ENCODE measurements at regions of chr5 and their contacts with region 1.

Region 1: GRCh38 chr5:17248999-17249634 is 31.7 kb downstream of the BASP1 start:
- DNase-seq: peak in 1 of 2 donors; percentile 15
- ATAC-seq: peak; percentile 50 to 64
- H3K4me3 ChIP-seq: no peak overlapping the region
- H3K27ac ChIP-seq: no peak overlapping the region
- H3K4me1 ChIP-seq: no peaks in the 10 kb centered on the region
- H3K27me3 ChIP-seq: no peaks in the 10 kb centered on the region
- CTCF ChIP-seq: no peak
- POLR2A ChIP-seq: no peak

Region 2: DNA sequence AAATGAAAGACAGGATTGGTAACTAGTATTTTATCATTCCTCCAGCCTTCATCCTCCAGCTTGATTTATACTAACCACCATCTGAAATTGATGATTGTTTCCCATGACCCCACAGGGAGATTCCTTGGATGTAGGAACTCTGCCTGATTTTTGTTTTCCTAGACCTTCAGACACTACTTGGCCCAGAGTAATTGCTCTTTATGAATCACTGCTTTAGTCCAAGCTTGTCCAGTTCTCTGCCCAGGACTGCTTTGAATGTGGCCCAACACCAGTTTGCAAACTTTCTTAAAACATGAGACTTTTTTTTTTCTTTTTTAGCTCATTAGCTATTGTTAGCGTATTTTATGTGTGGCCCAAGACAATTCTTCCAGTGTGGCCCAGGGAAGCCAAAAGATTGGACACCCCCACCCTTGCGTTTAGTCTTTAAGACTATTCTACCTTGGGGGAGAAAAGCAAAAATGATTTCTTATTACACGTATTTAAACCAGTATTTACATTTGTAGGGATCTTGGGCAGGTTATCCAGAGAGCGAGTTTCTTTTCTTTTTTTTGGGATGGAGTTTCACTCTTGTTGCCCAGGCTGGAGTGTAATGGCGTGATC is 13.3 kb before region 1 on chr5:
- in situ Hi-C with region 1: no loop called
- intact Hi-C with region 1: loop called (anchors 1 kb)
- DNase-seq: no peak
- ATAC-seq: no peak
- H3K4me3 ChIP-seq: no peak overlapping the region
- H3K27ac ChIP-seq: no peak overlapping the region
- H3K4me1 ChIP-seq: no peaks in the 10 kb centered on the region
- H3K27me3 ChIP-seq: no peaks in the 10 kb centered on the region
- CTCF ChIP-seq: no peak
- POLR2A ChIP-seq: no peak